Heart left ventricle (tissue), 16 donors: ENCODE measurements at regions of chr9 and their contacts with region 1.

Region 1: DNA sequence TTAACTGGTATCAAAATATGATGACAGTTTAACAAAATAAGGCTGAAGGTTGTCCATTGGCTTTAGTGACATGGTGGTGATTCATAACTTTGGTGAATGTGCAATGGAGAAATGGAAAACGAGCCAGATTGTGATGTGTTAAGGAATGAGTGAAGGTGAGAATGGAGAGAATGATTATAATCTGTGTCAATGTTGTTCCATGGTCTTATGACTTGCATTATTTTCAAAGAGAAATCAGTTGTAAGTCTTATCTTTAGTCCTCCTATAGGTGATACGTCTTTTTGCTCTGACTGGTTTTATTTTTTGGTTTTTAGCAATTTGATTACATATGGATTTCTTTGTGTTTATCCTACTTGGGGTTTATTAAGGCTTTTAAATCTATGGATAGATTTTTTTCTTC is 12.7 kb downstream of the OR1L6 start:
- DNase-seq: no peak
- ATAC-seq: no peak
- H3K4me3 ChIP-seq: no peak overlapping the region
- H3K27ac ChIP-seq: no peak overlapping the region
- H3K4me1 ChIP-seq: no peaks in the 10 kb centered on the region
- H3K27me3 ChIP-seq: no peaks in the 10 kb centered on the region
- CTCF ChIP-seq: no peak
- POLR2A ChIP-seq: no peak

Region 2: GRCh38 chr9:122723690-122724089 is 31.1 kb before region 1 on chr9 and contains the start of gene OR1L4:
- intact Hi-C with region 1: loop called in 1 of 10 experiments (anchors 2 kb)
- DNase-seq: no peak
- ATAC-seq: no peak
- H3K4me3 ChIP-seq: no peak within 1 kb of the TSS
- H3K27ac ChIP-seq: no peak within 1 kb of the TSS
- H3K4me1 ChIP-seq: no peaks in the 10 kb centered on the region
- H3K27me3 ChIP-seq: no peaks in the 10 kb centered on the region
- CTCF ChIP-seq: no peak
- POLR2A ChIP-seq: no peak
- total RNA-seq, gene OR1L4: not detected

Region 3: DNA sequence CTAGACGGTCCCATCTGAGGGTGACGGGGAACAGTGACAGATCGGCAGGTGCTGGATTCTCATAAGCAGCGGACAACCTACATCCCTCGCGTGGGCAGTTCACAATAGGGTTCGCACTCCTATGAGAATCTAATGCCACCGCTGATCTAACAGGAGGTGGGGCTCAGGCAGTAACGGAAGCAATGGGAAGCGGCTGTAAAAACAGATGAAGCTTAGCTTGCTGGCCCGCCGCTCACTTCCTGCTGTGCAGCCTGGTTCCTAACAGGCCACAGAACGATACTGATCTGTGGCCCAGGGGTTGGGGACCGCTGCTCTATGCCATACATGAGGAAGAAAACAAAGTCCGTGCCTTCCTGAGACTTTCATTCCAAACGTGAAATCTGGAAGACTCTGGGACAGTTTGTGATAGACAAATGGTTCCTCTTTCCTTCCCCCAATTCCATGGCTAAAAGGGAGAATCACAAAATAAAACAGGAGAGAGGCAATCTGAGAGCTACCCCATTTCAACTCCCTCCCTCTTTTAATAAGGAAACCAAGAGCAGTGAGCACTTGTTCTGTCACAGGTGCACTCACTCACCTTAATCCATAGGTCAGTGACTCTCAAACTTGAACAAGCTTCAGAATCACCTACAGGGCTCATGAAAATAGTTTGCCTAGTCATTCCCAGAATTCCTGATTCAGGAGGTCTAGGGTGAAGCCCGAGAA is 61.5 kb after region 1 on chr9:
- intact Hi-C with region 1: no loop called
- DNase-seq: peak in 4 of 5 donors; percentile 36 to 62 (median 54)
- ATAC-seq: peak; percentile 59 to 88 (median 77)
- H3K4me3 ChIP-seq: peak overlapping the region in 4 of 12 donors; percentile 14 to 31 (median 21)
- H3K27ac ChIP-seq: peak overlapping the region in 10 of 12 donors; percentile 8 to 71 (median 54)
- H3K4me1 ChIP-seq: peaks cover 0 to 45% (median 12%) of the 10 kb centered on the region in 12 donors
- H3K27me3 ChIP-seq: no peaks in the 10 kb centered on the region
- CTCF ChIP-seq: no peak
- POLR2A ChIP-seq: no peak

Region 4: DNA sequence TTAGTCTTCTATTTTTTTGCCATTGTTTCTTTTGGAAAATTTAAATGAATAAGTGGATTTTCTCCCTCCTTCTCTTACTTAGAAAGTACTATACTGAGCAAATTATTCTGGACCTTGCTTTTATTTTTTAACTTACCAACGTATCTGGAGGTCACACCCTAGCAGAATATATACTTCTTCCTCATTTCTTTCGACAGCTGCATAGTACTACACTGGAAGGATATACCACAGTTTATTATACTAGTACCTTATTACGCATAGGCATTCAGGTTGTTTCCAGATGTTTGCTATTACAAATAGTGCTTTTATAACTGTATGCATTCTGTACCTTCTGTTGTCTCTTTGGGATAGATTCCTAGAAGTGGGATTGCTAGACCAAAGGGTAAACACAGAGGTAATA is 133.7 kb after region 1 on chr9:
- intact Hi-C with region 1: no loop called
- DNase-seq: no peak
- ATAC-seq: no peak
- H3K4me3 ChIP-seq: no peak overlapping the region
- H3K27ac ChIP-seq: no peak overlapping the region
- H3K4me1 ChIP-seq: no peaks in the 10 kb centered on the region
- H3K27me3 ChIP-seq: no peaks in the 10 kb centered on the region
- CTCF ChIP-seq: no peak
- POLR2A ChIP-seq: no peak